Naive thymus-derived CD4-positive, alpha-beta T cell (primary cell): ENCODE measurements at regions of chr18 and their contacts with region 1.

Region 1: DNA sequence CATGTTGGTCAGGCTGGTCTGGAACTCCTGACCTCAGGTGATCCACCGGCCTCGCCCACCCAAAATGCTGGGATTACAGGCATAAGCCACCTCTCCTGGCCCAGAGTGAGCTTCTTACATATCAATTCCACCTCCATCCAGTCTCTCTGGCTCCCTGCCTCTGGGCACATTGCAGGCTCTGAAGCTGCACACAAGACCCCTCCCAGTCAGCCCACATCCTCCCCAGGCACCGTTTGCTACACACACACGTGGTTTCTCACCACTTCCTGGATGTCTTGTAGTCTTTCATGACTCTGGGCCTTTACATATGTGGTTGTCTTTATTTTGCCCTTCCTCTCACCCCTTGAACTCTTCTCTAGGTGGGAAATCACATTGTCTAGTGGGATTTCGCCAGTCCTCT is 64.0 kb upstream of the CABLES1 start:
- DNase-seq: peak; percentile 49 to 94 (median 92)
- ATAC-seq: peak; percentile 99
- H3K4me3 ChIP-seq: peak overlapping the region; percentile 12
- H3K4me3 Mint-ChIP-seq: peak overlapping the region; percentile 73 to 91 (median 78)
- H3K27ac ChIP-seq: peak overlapping the region; percentile 18
- H3K27ac Mint-ChIP-seq: peak overlapping the region; percentile 69 to 94 (median 91)
- H3K4me1 ChIP-seq: peaks cover 44 to 50% of the 10 kb centered on the region in 2 donors
- H3K4me1 Mint-ChIP-seq: peaks cover 46 to 83% (median 77%) of the 10 kb centered on the region in 7 donors
- H3K27me3 ChIP-seq: no peaks in the 10 kb centered on the region
- H3K27me3 Mint-ChIP-seq: peaks cover 0 to 3% (median 0%) of the 10 kb centered on the region in 5 donors

Region 2: GRCh38 chr18:21612125-21612991 is 1458.9 kb before region 1 on chr18 and contains the start of gene SNRPD1:
- CTCF ChIA-PET with region 1: no interaction called
- POLR2A ChIA-PET with region 1: no interaction called
- intact Hi-C with region 1: loop called in 1 of 2 experiments (anchors 10 kb)
- DNase-seq: peak; percentile 75 to 95 (median 87)
- ATAC-seq: peak; percentile 100
- H3K4me3 ChIP-seq: peak within 1 kb of the TSS; percentile 99
- H3K4me3 Mint-ChIP-seq: peak within 1 kb of the TSS; percentile 90 to 100 (median 96)
- H3K27ac ChIP-seq: peak within 1 kb of the TSS; percentile 95
- H3K27ac Mint-ChIP-seq: peak within 1 kb of the TSS; percentile 91 to 99 (median 98)
- H3K4me1 ChIP-seq: peaks cover 14 to 21% of the 10 kb centered on the region in 2 donors
- H3K4me1 Mint-ChIP-seq: peaks cover 20 to 56% (median 46%) of the 10 kb centered on the region in 7 donors
- H3K27me3 ChIP-seq: no peaks in the 10 kb centered on the region
- H3K27me3 Mint-ChIP-seq: no peaks in the 10 kb centered on the region
- total RNA-seq, gene SNRPD1: 21.9 to 83.4 (median 26.5) TPM

Region 3: DNA sequence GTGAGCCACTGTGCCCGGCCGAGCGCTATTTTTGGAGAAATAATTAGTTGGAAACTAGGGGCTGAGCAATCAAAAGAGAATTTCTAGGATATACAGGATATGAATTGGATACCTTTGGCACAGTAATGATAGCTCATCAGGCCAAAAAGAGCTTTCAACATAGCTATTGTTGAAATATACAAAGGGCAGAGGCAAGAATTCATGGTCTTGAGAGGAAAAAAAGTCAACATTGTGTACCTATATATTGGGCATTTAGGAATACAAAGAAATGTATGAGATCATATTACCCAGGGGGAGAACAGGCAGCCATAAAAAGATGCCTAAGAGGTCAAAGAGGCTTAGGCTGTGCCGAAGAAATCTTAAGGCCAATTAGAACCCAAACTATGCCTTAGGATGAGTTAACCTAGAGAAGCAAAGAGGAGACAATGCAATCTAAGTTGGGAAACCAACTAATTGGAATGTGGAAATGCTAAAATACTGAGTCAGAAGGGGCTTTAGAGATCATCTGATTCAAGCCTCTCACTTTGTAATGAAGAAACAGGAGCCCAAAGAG is 39.2 kb before region 1 on chr18:
- CTCF ChIA-PET with region 1: interaction called, 6 read pairs
- POLR2A ChIA-PET with region 1: interaction called, 3 read pairs
- intact Hi-C with region 1: loop called in 1 of 2 experiments (anchors 5 kb)
- DNase-seq: no peak
- ATAC-seq: no peak
- H3K4me3 ChIP-seq: no peak overlapping the region
- H3K4me3 Mint-ChIP-seq: no peak overlapping the region
- H3K27ac ChIP-seq: no peak overlapping the region
- H3K27ac Mint-ChIP-seq: peak overlapping the region in 2 of 9 donors; percentile 51
- H3K4me1 ChIP-seq: no peaks in the 10 kb centered on the region
- H3K4me1 Mint-ChIP-seq: peaks cover 0 to 12% (median 8%) of the 10 kb centered on the region in 7 donors
- H3K27me3 ChIP-seq: no peaks in the 10 kb centered on the region
- H3K27me3 Mint-ChIP-seq: no peaks in the 10 kb centered on the region

Region 4: GRCh38 chr18:23231340-23232021 is 160.2 kb after region 1 on chr18:
- CTCF ChIA-PET with region 1: no interaction called
- POLR2A ChIA-PET with region 1: no interaction called
- intact Hi-C with region 1: loop called (anchors 1 kb)
- DNase-seq: peak; percentile 14 to 86 (median 70)
- ATAC-seq: peak; percentile 93
- H3K4me3 ChIP-seq: peak overlapping the region; percentile 10
- H3K4me3 Mint-ChIP-seq: peak overlapping the region in 9 of 10 donors; percentile 7 to 80 (median 55)
- H3K27ac ChIP-seq: no peak overlapping the region
- H3K27ac Mint-ChIP-seq: peak overlapping the region; percentile 76 to 96 (median 88)
- H3K4me1 ChIP-seq: peaks cover 8 to 14% of the 10 kb centered on the region in 2 donors
- H3K4me1 Mint-ChIP-seq: peaks cover 0 to 78% (median 21%) of the 10 kb centered on the region in 7 donors
- H3K27me3 ChIP-seq: no peaks in the 10 kb centered on the region
- H3K27me3 Mint-ChIP-seq: no peaks in the 10 kb centered on the region

Region 5: GRCh38 chr18:23406271-23406787 is 335.0 kb after region 1 on chr18:
- CTCF ChIA-PET with region 1: no interaction called
- POLR2A ChIA-PET with region 1: no interaction called
- intact Hi-C with region 1: loop called in 1 of 2 experiments (anchors 2 kb)
- DNase-seq: no peak
- ATAC-seq: no peak
- H3K4me3 ChIP-seq: no peak overlapping the region
- H3K4me3 Mint-ChIP-seq: no peak overlapping the region
- H3K27ac ChIP-seq: no peak overlapping the region
- H3K27ac Mint-ChIP-seq: no peak overlapping the region
- H3K4me1 ChIP-seq: no peaks in the 10 kb centered on the region
- H3K4me1 Mint-ChIP-seq: peaks cover 0 to 7% (median 1%) of the 10 kb centered on the region in 7 donors
- H3K27me3 ChIP-seq: no peaks in the 10 kb centered on the region
- H3K27me3 Mint-ChIP-seq: no peaks in the 10 kb centered on the region